Uterus (tissue), 4 donors: ENCODE measurements at regions of chr18 and their contacts with region 1.

Region 1: GRCh38 chr18:59056706-59057492 is 82.8 kb upstream of the SEC11C start:
- DNase-seq: peak; percentile 62 to 69
- H3K4me3 ChIP-seq: no peak overlapping the region
- H3K27ac ChIP-seq: no peak overlapping the region
- H3K4me1 ChIP-seq: no peaks in the 10 kb centered on the region
- H3K27me3 ChIP-seq: no peaks in the 10 kb centered on the region
- CTCF ChIP-seq: peak; percentile 63 to 87 (median 70)
- POLR2A ChIP-seq: no peak

Region 2: DNA sequence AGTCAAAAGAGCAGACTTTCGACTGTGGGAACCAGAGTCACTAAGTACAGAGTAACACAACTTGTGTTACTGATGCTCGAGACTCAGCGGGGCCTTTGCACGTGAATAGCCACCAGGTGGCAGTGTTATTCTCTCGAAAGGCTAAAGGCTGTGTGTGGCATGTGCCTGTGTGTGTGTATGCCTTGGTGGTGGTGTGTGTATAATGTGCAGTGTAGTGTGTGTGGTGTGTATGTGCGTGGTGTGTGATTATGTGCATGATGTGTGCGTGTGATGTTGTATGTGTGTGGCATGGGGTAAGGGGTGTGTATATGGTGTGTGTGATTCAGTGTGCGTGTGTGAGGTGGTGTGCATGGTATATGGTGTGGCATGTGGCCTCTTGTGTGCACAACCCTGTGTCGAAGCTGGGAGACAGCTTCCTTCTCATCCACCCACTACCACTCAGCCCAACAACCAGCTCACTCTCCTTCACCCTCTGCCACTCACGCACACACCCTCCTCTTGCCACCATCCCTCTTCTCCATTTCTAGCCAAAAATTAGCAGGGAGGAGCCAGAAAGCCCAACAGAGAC is 275.2 kb before region 1 on chr18:
- intact Hi-C with region 1: loop called (anchors 5 kb)
- DNase-seq: peak; percentile 79 to 84
- H3K4me3 ChIP-seq: no peak overlapping the region
- H3K27ac ChIP-seq: peak overlapping the region in 1 of 2 donors; percentile 52
- H3K4me1 ChIP-seq: no peaks in the 10 kb centered on the region
- H3K27me3 ChIP-seq: no peaks in the 10 kb centered on the region
- CTCF ChIP-seq: peak; percentile 90 to 96 (median 92)
- POLR2A ChIP-seq: no peak

Region 3: DNA sequence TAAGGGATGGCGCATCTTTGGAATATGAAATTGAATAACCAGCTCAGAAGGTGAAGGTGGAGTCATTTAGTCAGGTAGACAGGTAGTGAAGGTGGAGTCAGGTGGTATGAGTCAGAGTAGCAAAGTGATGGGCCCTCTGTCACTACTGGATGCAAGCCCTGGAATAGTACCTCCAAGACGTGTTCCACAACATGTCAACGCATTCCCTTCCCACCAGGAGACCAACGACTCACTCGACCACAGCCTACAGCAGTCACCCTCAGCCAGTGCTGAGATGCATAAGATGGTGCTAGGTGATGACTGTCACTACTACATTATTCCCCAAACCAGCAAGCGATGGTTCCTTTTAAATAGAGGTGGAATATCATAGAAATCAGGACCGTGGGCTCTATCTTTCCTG is 254.7 kb after region 1 on chr18:
- intact Hi-C with region 1: no loop called
- DNase-seq: no peak
- H3K4me3 ChIP-seq: no peak overlapping the region
- H3K27ac ChIP-seq: no peak overlapping the region
- H3K4me1 ChIP-seq: no peaks in the 10 kb centered on the region
- H3K27me3 ChIP-seq: no peaks in the 10 kb centered on the region
- CTCF ChIP-seq: no peak
- POLR2A ChIP-seq: no peak